ENCODE measurements at regions of chr10 and their contacts with region 1.

Region 1: GRCh38 chr10:122980209-122981065 is at the start of gene PSTK:
- DNase-seq: peak; percentile 81
- ATAC-seq: peak; percentile 96
- H3K4me3 ChIP-seq: peak within 1 kb of the TSS; percentile 72 to 95 (median 72)
- H3K27ac ChIP-seq: peak within 1 kb of the TSS; percentile 97
- H3K4me1 ChIP-seq: peaks cover 28% of the 10 kb centered on the region
- H3K27me3 ChIP-seq: no peaks in the 10 kb centered on the region; a peak in 1 of 5 replicates
- CTCF ChIP-seq: peak; percentile 96
- EP300 ChIP-seq: 0 out of 4 replicates have a peak, but pooled peaks of 1 of the 2 experiments have one; percentile 16
- POLR2A ChIP-seq: peak; percentile 81 to 92
- RAD21 ChIP-seq: peak; percentile 71
- total RNA-seq, gene PSTK: 9.3 and 9.8 TPM in 2 replicates

Region 2: GRCh38 chr10:122939856-122940543 is 40.4 kb before region 1 on chr10:
- CTCF ChIA-PET with region 1: no interaction called
- POLR2A ChIA-PET with region 1: no interaction called
- in situ Hi-C with region 1: no loop called
- intact Hi-C with region 1: no loop called
- DNase-seq: no peak
- ATAC-seq: no peak
- H3K4me3 ChIP-seq: no peak overlapping the region
- H3K27ac ChIP-seq: no peak overlapping the region
- H3K4me1 ChIP-seq: no peaks in the 10 kb centered on the region
- H3K27me3 ChIP-seq: no peaks in the 10 kb centered on the region
- CTCF ChIP-seq: no peak
- EP300 ChIP-seq: no peak
- POLR2A ChIP-seq: no peak
- RAD21 ChIP-seq: no peak

Region 3: DNA sequence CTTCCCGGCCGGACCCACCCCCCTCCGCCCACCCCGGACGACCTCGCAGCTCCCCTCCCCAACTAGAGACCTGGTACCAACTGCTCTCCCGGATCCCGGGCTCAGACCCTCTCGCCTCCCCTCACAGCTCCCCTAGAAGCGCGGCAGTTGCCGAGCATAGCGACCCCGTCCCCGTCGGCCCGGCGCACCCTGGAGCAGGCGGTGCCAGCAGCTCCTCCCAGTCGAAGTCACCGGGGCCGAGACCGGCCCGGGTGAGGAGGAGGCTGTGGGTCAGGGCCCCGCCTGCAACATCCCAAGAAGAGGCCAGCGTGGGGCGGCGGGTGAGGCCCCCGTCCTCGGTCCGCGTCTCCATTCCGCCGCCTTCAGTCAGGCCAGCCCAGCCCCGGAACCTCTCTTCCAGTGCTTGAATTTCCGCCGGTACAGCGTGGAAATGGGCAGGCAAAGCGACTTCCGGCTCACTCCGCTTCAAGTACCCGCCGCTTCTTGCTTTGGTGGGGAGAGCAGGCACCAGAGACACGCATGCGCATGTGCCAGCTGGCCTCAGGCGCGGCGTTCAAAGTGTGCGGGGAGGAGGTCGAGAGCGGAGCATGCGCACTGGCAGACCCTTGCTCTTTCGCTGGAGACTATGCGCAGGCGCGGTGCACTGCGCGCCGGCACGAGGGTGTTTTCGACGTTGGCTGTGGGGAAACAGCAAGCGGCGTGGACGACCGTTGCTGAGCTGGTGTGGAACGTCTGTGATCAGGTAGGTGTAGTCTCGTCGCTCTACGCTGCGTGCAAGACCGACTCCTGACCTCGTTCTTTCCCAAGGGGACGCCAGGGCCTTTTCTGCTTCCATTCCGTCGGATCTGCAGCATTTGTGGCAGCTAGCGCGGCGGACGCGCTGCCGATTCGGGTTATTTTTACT is 26.4 kb before region 1 on chr10 and contains the start of gene C10orf88:
- CTCF ChIA-PET with region 1: no interaction called
- POLR2A ChIA-PET with region 1: interaction called, 10 read pairs
- in situ Hi-C with region 1: no loop called
- intact Hi-C with region 1: no loop called
- DNase-seq: peak; percentile 96
- ATAC-seq: peak; percentile 99
- H3K4me3 ChIP-seq: peak within 1 kb of the TSS; percentile 70 to 92 (median 79)
- H3K27ac ChIP-seq: peak within 1 kb of the TSS; percentile 81
- H3K4me1 ChIP-seq: peaks cover 48% of the 10 kb centered on the region
- H3K27me3 ChIP-seq: no peaks in the 10 kb centered on the region; a peak in 1 of 5 replicates
- CTCF ChIP-seq: peak; percentile 39
- EP300 ChIP-seq: 0 out of 4 replicates have a peak, but pooled peaks of 1 of the 2 experiments have one; percentile 14
- POLR2A ChIP-seq: peak; percentile 69 to 70
- RAD21 ChIP-seq: peak; percentile 13; the same call in 1 of the 2 replicates
- total RNA-seq, gene C10orf88: 11.8 and 13.4 TPM in 2 replicates

Region 4: DNA sequence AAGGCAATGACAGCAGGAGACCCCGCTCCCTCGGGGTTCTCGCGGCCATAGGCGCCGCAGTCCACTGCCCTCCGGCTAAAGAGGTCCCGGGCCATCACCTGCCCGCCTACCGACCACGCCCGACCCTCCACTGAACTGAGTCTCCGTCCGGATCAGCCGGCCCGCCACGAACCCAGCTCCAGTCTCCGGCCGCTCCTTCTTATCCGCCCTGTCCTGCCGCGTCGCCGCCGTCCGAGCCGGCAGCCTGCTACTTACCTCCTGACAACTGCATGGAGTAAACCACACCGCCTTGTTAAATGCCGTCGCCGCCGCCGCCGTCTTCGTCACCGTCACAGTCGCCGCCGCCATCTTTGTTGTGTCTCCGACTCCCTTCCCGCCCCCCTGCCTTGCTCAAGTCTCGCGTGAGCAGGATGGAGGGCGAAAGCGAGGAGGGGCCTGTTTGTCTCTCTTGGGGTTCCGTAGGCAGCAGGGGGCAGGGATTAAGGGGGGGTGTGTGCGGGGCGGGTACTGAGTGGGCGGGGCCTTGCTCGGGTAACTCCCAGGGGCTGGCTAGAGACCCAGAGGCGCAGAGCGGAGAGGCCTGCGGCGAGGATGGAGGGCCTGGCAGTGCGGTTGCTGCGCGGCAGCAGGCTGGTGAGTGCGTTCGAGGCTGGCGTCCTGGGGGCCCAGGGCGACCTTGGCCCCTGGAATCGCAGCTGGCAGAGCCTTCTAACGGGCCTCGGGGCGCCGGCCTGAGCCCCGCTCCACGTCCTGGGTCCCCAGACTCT is 28.2 kb after region 1 on chr10 and contains the starts of genes ACADSB and IKZF5:
- CTCF ChIA-PET with region 1: interaction called, 3 read pairs
- POLR2A ChIA-PET with region 1: interaction called, 37 read pairs
- in situ Hi-C with region 1: no loop called
- intact Hi-C with region 1: no loop called
- DNase-seq: peak; percentile 95
- ATAC-seq: peak; percentile 96
- H3K4me3 ChIP-seq: peak within 1 kb of the TSS; percentile 96 to 99 (median 99)
- H3K27ac ChIP-seq: peak within 1 kb of the TSS; percentile 80
- H3K4me1 ChIP-seq: peaks cover 52% of the 10 kb centered on the region
- H3K27me3 ChIP-seq: no peaks in the 10 kb centered on the region; a peak in 1 of 5 replicates
- CTCF ChIP-seq: no peak
- EP300 ChIP-seq: 0 out of 4 replicates have a peak, but pooled peaks of 1 of the 2 experiments have one; percentile 43
- POLR2A ChIP-seq: peak; percentile 99 to 100
- RAD21 ChIP-seq: peak; percentile 64; the same call in 1 of the 2 replicates
- total RNA-seq, gene ACADSB: 80.0 and 186 TPM in 2 replicates
- total RNA-seq, gene IKZF5: 3.7 and 4.1 TPM in 2 replicates

Measured in HepG2 (cell line).